ENCODE measurements at regions of chr10 and their contacts with region 1.

Region 1: DNA sequence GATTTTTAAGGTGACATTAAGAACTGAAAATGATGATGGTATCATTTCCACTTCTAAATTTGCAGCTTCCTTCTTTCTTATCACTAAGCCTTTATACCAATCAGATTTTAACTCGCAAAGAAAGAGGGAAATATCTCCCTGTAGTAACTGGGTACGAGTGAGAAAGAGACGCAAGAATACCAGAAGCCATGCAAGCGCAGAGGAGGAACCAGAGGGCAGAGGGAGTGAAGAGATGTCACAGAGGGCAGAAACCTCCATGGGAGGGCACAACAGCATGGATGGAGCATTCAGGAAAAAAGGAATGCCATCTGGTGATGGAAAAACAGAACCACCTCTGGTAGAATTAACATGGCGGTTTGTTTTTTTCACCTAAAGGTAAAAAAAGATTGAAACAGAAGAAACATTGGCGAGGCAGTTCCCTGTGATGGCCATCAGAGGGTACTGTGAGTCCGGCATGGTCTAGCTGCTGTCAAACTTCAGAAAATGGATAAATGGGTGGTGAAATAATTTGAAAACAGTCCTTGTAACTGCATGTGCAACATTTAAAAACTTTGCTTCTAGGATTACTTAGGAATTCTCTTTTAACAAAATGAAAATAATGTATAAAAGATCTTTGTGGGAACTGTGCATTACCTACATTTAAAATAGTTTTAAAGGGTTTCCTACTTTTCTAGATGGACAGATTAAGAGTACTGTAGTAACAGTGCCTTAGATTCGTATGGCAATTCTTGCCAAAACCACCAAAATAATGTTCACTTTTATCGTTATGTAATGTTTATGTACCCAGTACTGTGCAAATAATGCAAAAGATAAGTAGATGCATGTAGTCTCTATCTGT is 91.8 kb downstream of the ARHGAP12 start:
- DNase-seq: peak; percentile 33
- H3K4me3 Mint-ChIP-seq: no peak overlapping the region
- H3K27ac Mint-ChIP-seq: peak overlapping the region; percentile 60
- H3K4me1 Mint-ChIP-seq: peaks cover 6% of the 10 kb centered on the region
- H3K27me3 Mint-ChIP-seq: no peaks in the 10 kb centered on the region
- CTCF ChIP-seq: peak; percentile 74

Region 2: DNA sequence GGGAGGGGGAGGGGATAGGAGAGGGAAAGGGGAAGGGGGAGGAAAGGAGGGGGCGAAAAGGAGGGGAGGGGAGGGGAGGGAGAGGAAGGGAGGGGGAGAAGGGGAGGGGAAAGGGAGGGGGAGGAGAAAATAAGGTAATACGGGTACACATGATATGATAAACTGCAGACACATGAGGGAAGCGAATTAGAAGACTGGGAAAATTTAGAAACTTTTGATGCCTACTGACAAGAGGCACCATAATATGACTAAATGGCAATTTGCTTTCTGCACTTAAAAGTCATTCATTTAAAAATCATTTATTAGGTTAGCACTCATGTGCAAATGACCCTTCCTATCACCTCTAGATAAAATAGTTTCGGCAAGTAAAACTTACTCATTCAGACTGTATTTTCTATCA is 18.2 kb after region 1 on chr10:
- CTCF ChIA-PET with region 1: interaction called, 3 read pairs
- intact Hi-C with region 1: loop called (anchors 2 kb)
- DNase-seq: no peak
- H3K4me3 Mint-ChIP-seq: no peak overlapping the region
- H3K27ac Mint-ChIP-seq: no peak overlapping the region
- H3K4me1 Mint-ChIP-seq: no peaks in the 10 kb centered on the region
- H3K27me3 Mint-ChIP-seq: no peaks in the 10 kb centered on the region
- CTCF ChIP-seq: no peak

Region 3: DNA sequence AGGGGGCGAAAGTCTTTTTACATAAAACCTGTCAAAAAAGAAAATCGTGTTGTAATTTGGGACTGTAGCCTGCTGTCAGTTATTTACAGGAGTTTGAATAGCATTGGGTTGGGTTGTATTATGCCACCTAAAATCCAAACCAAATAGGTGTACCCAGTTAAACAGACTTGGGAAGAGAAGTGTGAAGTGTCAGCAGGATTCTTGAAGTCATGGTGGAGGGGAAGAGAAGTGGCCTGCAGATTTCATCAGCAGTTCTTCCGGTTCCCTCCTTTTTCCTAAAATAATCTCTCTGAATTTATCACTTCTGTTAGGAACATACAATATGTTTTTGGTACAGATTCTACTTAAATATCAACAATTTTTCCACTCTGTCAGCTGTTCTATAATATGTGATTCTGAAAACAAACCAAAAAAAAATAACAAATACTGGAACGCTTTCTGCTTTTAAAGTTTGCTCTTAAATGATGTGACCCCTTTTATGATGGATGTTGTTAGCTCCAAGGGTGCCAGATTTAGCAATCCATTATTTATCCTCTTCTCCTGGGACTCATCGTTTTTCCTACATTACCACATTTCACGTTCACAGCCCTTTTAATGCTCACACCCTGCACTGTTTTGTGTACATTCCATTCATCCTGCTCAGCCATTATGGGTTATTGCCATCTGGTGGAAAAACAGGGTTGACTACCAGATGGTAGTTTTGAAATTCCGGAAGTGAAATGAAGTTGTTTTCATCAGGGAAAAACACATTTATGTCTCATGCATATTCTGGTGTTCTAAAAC is 110.5 kb after region 1 on chr10:
- CTCF ChIA-PET with region 1: no interaction called
- intact Hi-C with region 1: loop called (anchors 2 kb)
- DNase-seq: peak; percentile 53
- H3K4me3 Mint-ChIP-seq: peak overlapping the region; percentile 31
- H3K27ac Mint-ChIP-seq: peak overlapping the region; percentile 78
- H3K4me1 Mint-ChIP-seq: peaks cover 51% of the 10 kb centered on the region
- H3K27me3 Mint-ChIP-seq: no peaks in the 10 kb centered on the region
- CTCF ChIP-seq: no peak

Region 4: GRCh38 chr10:32005050-32005449 is 168.3 kb after region 1 on chr10:
- CTCF ChIA-PET with region 1: no interaction called
- intact Hi-C with region 1: loop called (anchors 5 kb)
- DNase-seq: peak; percentile 64
- H3K4me3 Mint-ChIP-seq: no peak overlapping the region
- H3K27ac Mint-ChIP-seq: no peak overlapping the region
- H3K4me1 Mint-ChIP-seq: no peaks in the 10 kb centered on the region
- H3K27me3 Mint-ChIP-seq: no peaks in the 10 kb centered on the region
- CTCF ChIP-seq: peak; percentile 68

Region 5: DNA sequence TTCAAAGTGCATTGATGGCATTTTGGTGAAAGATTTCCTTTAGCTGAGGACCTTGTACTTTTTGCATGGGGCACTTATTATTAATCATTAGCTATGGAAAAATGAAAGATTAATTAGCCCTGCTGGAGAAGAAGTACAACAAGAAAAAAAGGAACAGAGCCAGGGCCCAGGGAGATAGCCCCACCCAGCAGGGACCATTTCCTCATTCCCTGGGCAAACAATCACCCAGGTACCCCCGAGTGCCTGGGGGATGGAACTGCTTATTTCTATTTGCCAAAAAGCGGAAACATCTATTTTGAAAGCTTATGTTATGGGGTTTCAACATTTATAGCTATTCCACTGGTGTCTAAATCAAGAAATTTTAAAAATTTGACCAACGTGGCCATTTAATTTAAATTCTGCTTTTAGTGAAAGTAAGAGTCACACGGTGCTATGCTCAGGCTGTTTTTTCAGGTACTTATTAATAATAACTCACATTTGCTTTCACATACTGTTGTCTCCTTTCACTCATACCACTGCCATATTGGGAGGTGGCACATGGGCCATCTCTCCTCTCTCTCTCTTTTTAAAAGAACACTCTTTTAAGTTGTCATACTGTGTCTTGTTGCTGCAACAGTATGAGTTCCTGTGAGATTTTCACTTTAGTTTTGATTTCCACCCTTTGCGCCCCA is 363.1 kb after region 1 on chr10:
- CTCF ChIA-PET with region 1: no interaction called
- intact Hi-C with region 1: no loop called
- DNase-seq: peak; percentile 78
- H3K4me3 Mint-ChIP-seq: no peak overlapping the region
- H3K27ac Mint-ChIP-seq: peak overlapping the region; percentile 53
- H3K4me1 Mint-ChIP-seq: peaks cover 35% of the 10 kb centered on the region
- H3K27me3 Mint-ChIP-seq: no peaks in the 10 kb centered on the region
- CTCF ChIP-seq: no peak

Region 6: DNA sequence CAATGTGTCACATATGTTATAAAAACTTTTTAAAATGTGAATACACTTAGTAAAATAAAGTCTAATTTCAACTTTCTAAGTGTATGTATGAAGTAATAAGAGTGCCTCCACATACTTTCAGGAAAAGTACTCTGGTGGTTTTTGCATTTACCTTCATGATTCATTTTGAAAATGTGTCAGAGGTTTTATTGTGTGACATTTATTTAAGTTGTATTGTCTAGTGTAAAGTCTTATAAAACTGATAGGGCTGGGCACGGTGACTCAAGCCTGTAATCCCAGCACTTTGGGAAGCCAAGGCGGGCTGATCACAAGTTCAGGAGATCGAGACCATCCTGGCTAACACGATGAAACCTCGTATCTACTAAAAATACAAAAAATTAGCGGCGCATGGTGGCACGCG is 894.7 kb after region 1 on chr10:
- CTCF ChIA-PET with region 1: no interaction called
- intact Hi-C with region 1: no loop called
- DNase-seq: no peak
- H3K4me3 Mint-ChIP-seq: no peak overlapping the region
- H3K27ac Mint-ChIP-seq: no peak overlapping the region
- H3K4me1 Mint-ChIP-seq: no peaks in the 10 kb centered on the region
- H3K27me3 Mint-ChIP-seq: no peaks in the 10 kb centered on the region
- CTCF ChIP-seq: no peak

Measured in Calu3 (cell line).